ENCODE measurements at regions of chr11 and their contacts with region 1.

Region 1: DNA sequence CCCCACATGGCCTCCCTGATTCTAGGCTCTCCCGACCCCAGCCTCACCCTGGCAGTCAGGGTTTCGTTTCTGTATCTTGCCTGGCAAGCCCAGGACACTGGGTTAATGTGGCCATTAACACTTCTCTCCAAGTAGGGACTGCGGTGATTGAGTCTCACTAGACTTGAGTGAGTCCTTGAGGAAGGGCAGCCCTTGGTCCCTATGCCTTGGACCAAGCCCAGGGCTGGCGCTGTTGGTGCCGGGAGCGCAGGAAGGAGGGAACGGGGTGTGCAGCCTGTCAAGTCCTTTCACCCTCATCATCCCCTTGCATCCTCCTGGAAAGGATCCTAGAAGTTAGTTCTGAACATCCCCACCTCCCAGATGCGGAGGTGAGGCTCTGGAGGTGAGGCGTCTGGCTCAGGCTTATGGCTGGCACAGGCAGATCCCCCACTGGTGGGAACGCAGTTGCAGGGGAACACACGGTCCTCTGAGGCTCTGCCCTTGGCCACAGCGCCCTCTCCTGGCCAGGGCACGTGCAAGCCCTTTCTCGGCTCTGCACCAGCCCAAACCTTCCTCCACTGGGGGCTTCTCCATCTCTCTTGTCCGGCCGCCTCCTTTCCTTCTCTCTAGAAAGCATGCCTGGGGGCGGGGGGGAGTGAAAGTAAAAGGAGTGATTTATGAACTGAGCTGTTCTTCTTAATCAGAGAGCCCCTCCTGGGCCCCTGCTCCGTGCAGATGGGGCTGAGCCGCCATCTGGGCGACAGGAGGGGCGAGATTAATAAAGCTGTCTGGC is 56.7 kb downstream of the TP53I11 start:
- DNase-seq: peak; percentile 69
- ATAC-seq: peak; percentile 89
- H3K4me3 Mint-ChIP-seq: no peak overlapping the region
- H3K27ac Mint-ChIP-seq: no peak overlapping the region
- H3K4me1 Mint-ChIP-seq: no peaks in the 10 kb centered on the region
- H3K27me3 Mint-ChIP-seq: no peaks in the 10 kb centered on the region
- CTCF ChIP-seq: peak; percentile 84

Region 2: DNA sequence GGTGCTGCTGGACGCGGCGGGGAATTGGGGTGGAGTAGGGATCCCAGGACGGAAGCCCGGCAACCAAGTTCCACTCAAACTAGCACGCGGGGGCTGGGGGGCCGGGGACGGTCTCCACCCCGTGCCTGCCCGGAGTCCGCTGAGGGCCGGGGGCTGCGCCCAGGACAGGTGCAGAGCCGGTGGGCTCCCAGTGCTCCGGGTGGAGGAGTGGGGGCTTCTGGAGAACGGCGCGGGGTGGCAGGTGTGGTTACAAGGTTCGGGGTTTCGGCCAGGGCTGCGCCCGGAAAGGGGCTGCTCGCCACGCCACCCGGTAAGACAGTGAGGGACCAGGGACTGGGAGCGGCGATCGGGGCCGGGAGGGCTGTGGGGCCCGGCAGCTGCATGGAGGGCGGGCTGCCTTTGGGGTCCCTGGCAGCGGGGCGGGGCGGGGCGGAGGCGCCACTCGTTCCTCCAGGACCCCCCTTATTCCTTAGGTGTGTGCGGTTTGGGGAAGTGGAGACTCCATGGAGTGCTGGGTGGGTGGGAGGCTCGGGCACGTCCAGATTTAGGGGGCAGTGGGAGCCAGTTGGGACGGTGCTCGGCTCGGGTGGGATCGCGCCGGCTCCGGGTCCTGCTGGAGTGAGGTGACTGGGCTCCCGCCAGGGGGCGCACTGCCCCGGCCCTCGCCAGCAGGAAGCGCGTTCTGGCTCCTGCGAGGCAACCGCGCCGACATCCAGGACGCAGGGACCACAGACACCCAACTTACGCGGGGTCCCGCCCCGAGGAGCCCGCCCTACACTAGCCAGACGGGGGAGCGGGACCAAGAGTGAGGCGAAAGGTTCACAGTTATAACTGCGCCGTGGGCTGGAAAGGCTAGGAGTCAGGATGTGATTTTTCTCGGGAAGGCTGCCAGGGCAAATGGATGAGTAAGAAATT is 166.4 kb before region 1 on chr11:
- CTCF ChIA-PET with region 1: interaction called, 5 read pairs
- POLR2A ChIA-PET with region 1: no interaction called
- intact Hi-C with region 1: loop called (anchors 5 kb)
- DNase-seq: peak; percentile 77
- ATAC-seq: peak; percentile 69
- H3K4me3 Mint-ChIP-seq: peak overlapping the region; percentile 73
- H3K27ac Mint-ChIP-seq: no peak overlapping the region
- H3K4me1 Mint-ChIP-seq: peaks cover 35% of the 10 kb centered on the region
- H3K27me3 Mint-ChIP-seq: peaks cover 25% of the 10 kb centered on the region
- CTCF ChIP-seq: peak; percentile 98